H1 (cell line): ENCODE measurements at regions of chr16 and their contacts with region 1.

Region 1: GRCh38 chr16:68367030-68367429 is 56.2 kb downstream of the PRMT7 start:
- DNase-seq: peak in 1 of 2 experiments; percentile 87
- H3K4me3 ChIP-seq: no peak overlapping the region
- H3K27ac ChIP-seq: no peak overlapping the region
- H3K4me1 ChIP-seq: peaks cover 0 to 4% (median 3%) of the 10 kb centered on the region in 4 experiments; a peak in 3 of 7 replicates
- H3K27me3 ChIP-seq: no peaks in the 10 kb centered on the region
- CTCF ChIP-seq: peak; percentile 62 to 84 (median 68)
- EP300 ChIP-seq: no peak
- POLR2A ChIP-seq: no peak
- RAD21 ChIP-seq: peak; percentile 66 to 75

Region 2: DNA sequence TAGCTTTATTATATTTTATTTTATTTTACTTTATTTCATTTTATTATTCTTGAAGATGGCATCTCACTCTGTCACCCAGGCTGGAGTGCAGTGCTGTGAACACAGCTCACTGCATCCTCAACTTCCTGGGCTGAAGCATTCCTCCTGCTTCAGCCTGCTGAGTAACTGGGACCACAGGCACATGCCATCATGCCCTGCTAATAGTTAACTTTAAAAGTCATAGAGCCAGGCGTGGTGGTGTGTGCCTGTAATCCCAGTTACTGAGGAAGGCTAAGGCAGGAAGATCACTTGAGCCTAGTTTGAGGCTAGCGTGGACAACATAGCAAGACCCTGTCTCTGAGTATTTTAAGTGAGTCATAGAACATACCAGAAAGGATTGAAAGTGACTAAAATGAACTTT is 169.8 kb before region 1 on chr16:
- CTCF ChIA-PET with region 1: no interaction called
- POLR2A ChIA-PET with region 1: no interaction called
- DNase-seq: no peak
- H3K4me3 ChIP-seq: no peak overlapping the region
- H3K27ac ChIP-seq: no peak overlapping the region
- H3K4me1 ChIP-seq: no peaks in the 10 kb centered on the region
- H3K27me3 ChIP-seq: no peaks in the 10 kb centered on the region
- CTCF ChIP-seq: no peak
- EP300 ChIP-seq: no peak
- POLR2A ChIP-seq: no peak
- RAD21 ChIP-seq: no peak

Region 3: GRCh38 chr16:68356249-68356918 is 10.6 kb before region 1 on chr16:
- CTCF ChIA-PET with region 1: interaction called, 95 read pairs
- POLR2A ChIA-PET with region 1: interaction called, 6 read pairs
- DNase-seq: no peak
- H3K4me3 ChIP-seq: no peak overlapping the region
- H3K27ac ChIP-seq: no peak overlapping the region
- H3K4me1 ChIP-seq: no peaks in the 10 kb centered on the region
- H3K27me3 ChIP-seq: no peaks in the 10 kb centered on the region
- CTCF ChIP-seq: no peak
- EP300 ChIP-seq: no peak
- POLR2A ChIP-seq: no peak
- RAD21 ChIP-seq: no peak

Region 4: GRCh38 chr16:68396481-68396880 is 29.5 kb after region 1 on chr16:
- CTCF ChIA-PET with region 1: interaction called, 55 read pairs
- POLR2A ChIA-PET with region 1: interaction called, 3 read pairs
- DNase-seq: no peak
- H3K4me3 ChIP-seq: no peak overlapping the region
- H3K27ac ChIP-seq: no peak overlapping the region
- H3K4me1 ChIP-seq: peaks cover 0 to 11% (median 2%) of the 10 kb centered on the region in 4 experiments; a peak in 5 of 7 replicates
- H3K27me3 ChIP-seq: no peaks in the 10 kb centered on the region
- CTCF ChIP-seq: peak in 2 of 3 experiments; percentile 2 to 13; a peak in 1 of 4 replicates
- EP300 ChIP-seq: no peak
- POLR2A ChIP-seq: no peak
- RAD21 ChIP-seq: no peak; a peak in 1 of 4 replicates

Region 5: DNA sequence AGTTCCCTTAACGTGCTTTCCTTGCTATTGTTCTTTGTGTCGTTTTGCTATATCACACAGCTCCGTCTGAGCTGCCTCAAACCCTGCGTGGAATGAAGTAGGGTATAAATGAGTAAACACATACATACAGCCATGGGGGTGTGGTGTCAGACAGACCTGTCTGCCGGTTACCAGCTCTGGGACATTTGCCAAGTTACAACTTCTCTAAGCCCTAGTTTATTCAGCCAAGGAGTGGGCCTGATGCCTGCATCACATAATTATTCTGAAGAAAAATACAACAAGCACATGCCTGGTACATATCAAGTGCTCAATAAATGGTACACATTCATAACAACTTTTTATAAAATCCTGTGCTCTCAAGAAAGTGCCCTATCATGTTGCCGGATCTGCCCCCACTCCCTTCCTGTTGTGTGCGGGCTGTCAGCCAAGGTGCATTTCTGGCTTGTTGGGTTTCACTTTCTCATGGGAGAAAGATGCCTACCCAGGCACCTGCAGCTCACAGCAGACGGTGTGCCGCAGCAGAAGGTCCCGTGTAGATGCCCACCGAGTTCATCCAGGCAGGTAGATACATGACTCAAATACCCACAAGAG is 50.8 kb after region 1 on chr16:
- CTCF ChIA-PET with region 1: interaction called, 10 read pairs
- POLR2A ChIA-PET with region 1: interaction called, 3 read pairs
- DNase-seq: no peak
- H3K4me3 ChIP-seq: no peak overlapping the region
- H3K27ac ChIP-seq: no peak overlapping the region
- H3K4me1 ChIP-seq: peaks cover 0 to 5% (median 1%) of the 10 kb centered on the region in 4 experiments; a peak in 2 of 7 replicates
- H3K27me3 ChIP-seq: no peaks in the 10 kb centered on the region; a peak in 1 of 7 replicates
- CTCF ChIP-seq: no peak
- EP300 ChIP-seq: no peak
- POLR2A ChIP-seq: no peak
- RAD21 ChIP-seq: no peak

Region 6: DNA sequence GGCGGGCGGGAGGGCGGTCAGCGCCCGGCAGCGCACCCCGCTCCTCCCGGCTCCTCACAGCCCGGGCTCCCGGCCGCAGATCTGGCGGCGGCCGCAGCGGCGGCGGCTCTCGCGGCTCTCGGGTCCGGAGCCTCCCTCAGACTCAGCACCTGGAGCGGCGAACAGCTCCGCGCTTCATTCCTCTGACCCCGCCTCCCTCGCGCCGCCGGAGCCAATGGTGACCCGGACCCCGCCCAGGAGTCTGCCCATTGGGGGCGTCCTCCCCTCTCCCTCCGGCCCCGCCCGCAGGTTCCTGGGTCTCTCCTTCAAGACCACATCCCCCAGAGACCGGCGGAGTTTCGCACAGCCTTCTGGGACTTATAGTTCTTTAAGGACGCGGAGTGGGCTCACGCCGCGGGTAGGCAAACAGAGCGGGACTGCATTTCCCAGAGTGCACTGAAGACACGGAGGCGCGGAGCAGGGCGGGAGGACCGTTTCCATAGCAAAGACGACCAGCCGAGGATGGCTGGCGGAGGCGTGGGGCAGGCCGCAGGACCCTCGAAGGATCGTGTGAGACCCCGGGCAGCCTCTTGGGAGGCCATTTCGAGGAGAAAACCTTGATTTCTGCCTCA is 81.4 kb after region 1 on chr16 and contains the start of gene SMPD3:
- CTCF ChIA-PET with region 1: interaction called, 153 read pairs
- POLR2A ChIA-PET with region 1: no interaction called
- DNase-seq: peak; percentile 99
- H3K4me3 ChIP-seq: peak within 1 kb of the TSS; percentile 53 to 70 (median 62); a peak in 7 of 8 replicates
- H3K27ac ChIP-seq: no peak within 1 kb of the TSS
- H3K4me1 ChIP-seq: peaks cover 0 to 12% (median 10%) of the 10 kb centered on the region in 4 experiments; a peak in 5 of 7 replicates
- H3K27me3 ChIP-seq: peaks cover 16 to 26% (median 23%) of the 10 kb centered on the region in 4 experiments
- CTCF ChIP-seq: no peak
- EP300 ChIP-seq: 0 out of 3 replicates have a peak, but pooled peaks of 1 of the 2 experiments have one; percentile 19
- POLR2A ChIP-seq: no peak
- RAD21 ChIP-seq: no peak
- total RNA-seq, gene SMPD3: 1.1 and 1.3 TPM in 2 replicates

Region 7: DNA sequence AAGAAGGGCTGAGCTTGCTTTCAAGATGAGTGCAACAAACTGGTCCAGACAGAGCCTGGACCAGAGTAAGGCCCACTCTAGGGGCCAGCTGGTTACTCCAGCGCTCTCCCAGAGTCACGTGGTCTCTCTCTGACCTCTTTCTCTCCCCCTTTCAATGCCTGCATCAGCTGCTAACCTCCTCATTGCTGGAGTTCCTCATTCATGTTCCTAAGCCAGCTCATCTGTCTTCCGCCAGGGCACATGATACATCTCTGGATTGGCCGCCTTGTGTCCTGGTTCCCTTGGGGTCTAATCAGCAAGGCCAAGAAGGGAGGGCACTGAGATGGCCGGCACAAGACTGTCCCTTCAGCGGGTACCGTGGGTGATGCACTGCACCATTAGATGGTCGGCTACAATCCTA is 145.2 kb after region 1 on chr16:
- CTCF ChIA-PET with region 1: interaction called, 136 read pairs
- POLR2A ChIA-PET with region 1: interaction called, 3 read pairs
- DNase-seq: no peak
- H3K4me3 ChIP-seq: no peak overlapping the region
- H3K27ac ChIP-seq: no peak overlapping the region
- H3K4me1 ChIP-seq: no peaks in the 10 kb centered on the region
- H3K27me3 ChIP-seq: peaks cover 0 to 3% (median 0%) of the 10 kb centered on the region in 4 experiments; a peak in 2 of 7 replicates
- CTCF ChIP-seq: no peak
- EP300 ChIP-seq: no peak
- POLR2A ChIP-seq: no peak
- RAD21 ChIP-seq: no peak